ENCODE measurements at regions of chr12 and their contacts with region 1.

Region 1: GRCh38 chr12:116559162-116559935 is at the start of gene MAP1LC3B2:
- DNase-seq: peak; percentile 92
- H3K4me3 Mint-ChIP-seq: peak within 1 kb of the TSS; percentile 73
- H3K27ac Mint-ChIP-seq: peak within 1 kb of the TSS; percentile 95
- H3K4me1 Mint-ChIP-seq: peaks cover 22% of the 10 kb centered on the region
- H3K27me3 Mint-ChIP-seq: no peaks in the 10 kb centered on the region
- total RNA-seq, gene MAP1LC3B2: 1.2 to 1.5 TPM

Region 2: DNA sequence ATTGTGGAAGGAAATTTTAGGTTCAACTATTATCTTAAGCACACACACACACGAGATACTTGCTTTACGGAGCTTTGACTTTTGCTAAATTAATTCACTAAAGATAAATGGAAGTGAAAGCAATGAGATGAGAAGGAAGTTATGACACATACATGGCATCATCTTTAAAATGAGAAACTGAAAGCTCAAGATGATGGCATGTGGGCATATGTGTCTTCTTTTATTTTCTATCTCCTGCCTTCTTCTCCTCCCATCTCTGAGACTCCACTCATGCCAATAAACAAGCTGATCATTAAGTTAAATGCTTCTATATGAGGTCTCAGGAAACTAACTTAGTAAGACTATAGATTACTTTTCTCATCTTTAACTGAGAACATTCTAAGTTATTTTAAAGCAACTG is 498.6 kb before region 1 on chr12:
- CTCF ChIA-PET with region 1: no interaction called
- intact Hi-C with region 1: loop called (anchors 5 kb)
- DNase-seq: no peak
- H3K4me3 Mint-ChIP-seq: peak overlapping the region; percentile 56
- H3K27ac Mint-ChIP-seq: peak overlapping the region; percentile 81
- H3K4me1 Mint-ChIP-seq: peaks cover 52% of the 10 kb centered on the region
- H3K27me3 Mint-ChIP-seq: no peaks in the 10 kb centered on the region

Region 3: GRCh38 chr12:116325336-116325664 is 234.0 kb before region 1 on chr12:
- CTCF ChIA-PET with region 1: no interaction called
- intact Hi-C with region 1: loop called (anchors 1 kb)
- DNase-seq: peak; percentile 50
- H3K4me3 Mint-ChIP-seq: no peak overlapping the region
- H3K27ac Mint-ChIP-seq: peak overlapping the region; percentile 70
- H3K4me1 Mint-ChIP-seq: peaks cover 32% of the 10 kb centered on the region
- H3K27me3 Mint-ChIP-seq: no peaks in the 10 kb centered on the region

Region 4: GRCh38 chr12:116594325-116595038 is 35.1 kb after region 1 on chr12:
- CTCF ChIA-PET with region 1: interaction called, 5 read pairs
- intact Hi-C with region 1: loop called (anchors 1 kb)
- DNase-seq: peak; percentile 76
- H3K4me3 Mint-ChIP-seq: no peak overlapping the region
- H3K27ac Mint-ChIP-seq: no peak overlapping the region
- H3K4me1 Mint-ChIP-seq: peaks cover 22% of the 10 kb centered on the region
- H3K27me3 Mint-ChIP-seq: no peaks in the 10 kb centered on the region

Region 5: DNA sequence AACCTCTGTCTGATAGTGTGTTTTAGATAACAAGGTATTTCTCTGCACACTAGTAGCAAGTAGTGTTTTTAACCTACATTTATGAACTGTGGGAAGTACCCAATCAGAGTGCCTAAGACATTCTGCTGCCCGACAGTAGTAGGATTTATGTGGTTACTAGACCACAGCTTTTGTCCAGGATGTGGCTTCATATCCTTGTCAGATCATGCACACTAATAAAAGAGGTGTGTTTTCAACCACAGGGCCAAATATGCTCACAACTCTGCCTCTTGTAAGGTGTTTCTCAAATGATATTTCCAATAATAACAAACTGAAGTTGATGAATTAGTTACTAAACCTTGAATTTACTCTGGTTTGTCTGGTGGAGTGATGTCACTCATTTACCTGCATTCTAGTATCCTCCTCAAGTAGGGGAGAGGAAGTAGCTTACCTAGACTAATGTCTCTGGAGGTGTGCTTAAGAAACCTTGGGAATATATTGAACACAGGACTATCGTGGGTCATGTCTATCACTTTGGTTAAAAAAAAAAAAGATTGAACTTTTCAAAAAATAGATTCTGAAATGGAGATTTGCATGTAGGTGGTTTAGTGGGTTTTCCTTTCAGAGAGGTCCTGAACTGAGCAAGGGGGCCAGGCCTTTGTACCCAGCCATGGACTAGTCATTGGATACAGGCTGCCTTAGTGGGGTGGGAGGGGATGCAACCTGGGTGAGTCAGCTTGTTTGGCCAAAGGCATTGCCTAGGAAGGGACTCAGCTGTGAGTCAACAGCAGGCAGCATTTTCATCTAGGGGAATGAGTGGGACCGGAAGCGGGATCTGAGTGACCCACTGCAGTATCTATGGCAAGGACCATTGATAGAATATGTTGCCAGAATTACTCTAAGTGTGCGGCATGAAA is 365.5 kb after region 1 on chr12:
- CTCF ChIA-PET with region 1: no interaction called
- intact Hi-C with region 1: loop called (anchors 1 kb)
- DNase-seq: peak; percentile 70
- H3K4me3 Mint-ChIP-seq: no peak overlapping the region
- H3K27ac Mint-ChIP-seq: no peak overlapping the region
- H3K4me1 Mint-ChIP-seq: peaks cover 66% of the 10 kb centered on the region
- H3K27me3 Mint-ChIP-seq: peaks cover 3% of the 10 kb centered on the region